Calu3 (cell line): ENCODE measurements at regions of chr9 and their contacts with region 1.

Region 1: GRCh38 chr9:111759762-111760639 is 34.7 kb downstream of the SHOC1 start:
- DNase-seq: peak; percentile 60
- H3K4me3 Mint-ChIP-seq: no peak overlapping the region
- H3K27ac Mint-ChIP-seq: peak overlapping the region; percentile 35
- H3K4me1 Mint-ChIP-seq: peaks cover 13% of the 10 kb centered on the region
- H3K27me3 Mint-ChIP-seq: no peaks in the 10 kb centered on the region
- CTCF ChIP-seq: no peak

Region 2: GRCh38 chr9:111815277-111816070 is 55.5 kb after region 1 on chr9:
- CTCF ChIA-PET with region 1: no interaction called
- intact Hi-C with region 1: loop called (anchors 5 kb)
- DNase-seq: peak; percentile 36
- H3K4me3 Mint-ChIP-seq: peak overlapping the region; percentile 50
- H3K27ac Mint-ChIP-seq: peak overlapping the region; percentile 90
- H3K4me1 Mint-ChIP-seq: peaks cover 28% of the 10 kb centered on the region
- H3K27me3 Mint-ChIP-seq: no peaks in the 10 kb centered on the region
- CTCF ChIP-seq: no peak

Region 3: GRCh38 chr9:111896353-111896958 is 136.5 kb after region 1 on chr9 and contains the start of gene UGCG:
- CTCF ChIA-PET with region 1: no interaction called
- intact Hi-C with region 1: loop called (anchors 1 kb)
- DNase-seq: peak; percentile 90
- H3K4me3 Mint-ChIP-seq: no peak within 1 kb of the TSS
- H3K27ac Mint-ChIP-seq: peak within 1 kb of the TSS; percentile 96
- H3K4me1 Mint-ChIP-seq: no peaks in the 10 kb centered on the region
- H3K27me3 Mint-ChIP-seq: no peaks in the 10 kb centered on the region
- CTCF ChIP-seq: no peak
- total RNA-seq, gene UGCG: 75.5 and 84.8 TPM in 2 replicates

Region 4: DNA sequence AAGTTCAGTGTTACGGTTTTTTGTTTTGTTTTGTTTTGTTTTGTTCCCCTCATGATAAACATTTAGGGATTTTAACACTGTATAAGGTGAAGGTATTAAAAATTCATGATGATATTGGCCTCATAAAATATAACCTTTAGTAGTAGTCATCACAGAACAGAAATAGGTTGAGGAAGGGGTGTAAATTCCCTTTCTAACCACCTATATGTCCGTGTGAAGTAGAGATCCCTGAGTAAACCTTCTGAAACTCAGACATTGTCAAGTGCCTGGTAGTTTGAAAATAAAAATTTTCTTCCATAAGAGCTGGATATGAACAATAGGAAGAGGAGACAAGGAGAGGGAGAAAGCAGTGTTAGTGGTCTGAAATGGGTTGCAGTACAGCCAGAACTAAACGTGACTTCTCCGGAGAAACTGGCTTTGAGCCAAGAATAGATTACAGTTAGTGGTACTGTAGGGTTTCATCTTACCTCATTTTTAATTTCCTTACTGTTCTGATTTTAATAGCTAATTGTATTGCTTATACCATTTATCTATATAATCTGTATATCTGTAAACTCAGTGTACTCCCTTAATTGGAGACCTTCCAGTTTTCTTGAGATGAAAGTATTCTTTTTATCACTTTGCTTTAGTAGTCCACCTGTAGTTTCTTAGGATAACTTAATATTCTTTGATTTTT is 154.9 kb after region 1 on chr9:
- CTCF ChIA-PET with region 1: no interaction called
- intact Hi-C with region 1: loop called (anchors 5 kb)
- DNase-seq: no peak
- H3K4me3 Mint-ChIP-seq: peak overlapping the region; percentile 69
- H3K27ac Mint-ChIP-seq: peak overlapping the region; percentile 63
- H3K4me1 Mint-ChIP-seq: peaks cover 43% of the 10 kb centered on the region
- H3K27me3 Mint-ChIP-seq: no peaks in the 10 kb centered on the region
- CTCF ChIP-seq: no peak

Region 5: DNA sequence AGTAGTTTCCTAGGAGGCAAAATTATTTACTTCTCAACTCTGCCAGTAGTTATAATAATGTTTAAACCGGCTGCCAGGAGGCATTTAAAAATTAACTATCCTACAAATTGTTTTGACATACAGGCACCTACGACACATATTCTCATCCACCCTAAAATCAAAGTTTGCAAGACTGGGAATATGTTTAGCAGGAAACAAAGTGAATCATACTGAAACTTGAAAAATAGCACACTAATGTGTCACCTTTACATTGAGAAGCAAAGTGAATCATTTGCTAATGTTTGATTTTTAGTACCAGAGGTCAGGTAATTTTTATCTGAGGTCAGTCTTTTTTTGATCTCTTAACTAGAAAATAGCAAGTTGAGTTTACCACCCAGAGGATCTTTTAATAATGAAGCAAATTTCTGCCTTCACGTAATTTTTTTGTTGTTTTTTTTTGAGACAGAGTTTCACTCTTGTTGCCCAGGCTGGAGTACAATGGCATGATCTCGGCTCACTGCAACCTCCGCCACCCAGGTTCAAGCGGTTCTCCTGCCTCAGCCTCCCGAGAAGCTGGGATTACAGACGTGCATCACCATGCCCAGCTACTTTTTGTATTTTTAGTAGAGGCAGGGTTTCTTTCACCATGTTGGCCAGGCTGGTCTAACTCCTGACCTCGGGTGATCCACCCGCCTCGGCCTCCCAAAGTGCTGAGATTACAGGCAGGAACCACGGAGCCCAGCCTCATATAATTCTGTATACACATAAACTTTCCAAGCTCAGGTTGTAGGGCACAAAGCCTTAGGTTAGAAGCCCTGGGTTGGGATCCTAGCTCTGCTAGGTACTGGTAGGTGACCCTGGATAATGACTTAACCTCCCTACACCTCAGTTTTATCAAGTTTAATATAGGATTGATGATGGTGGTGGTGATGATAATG is 260.9 kb after region 1 on chr9:
- CTCF ChIA-PET with region 1: no interaction called
- intact Hi-C with region 1: loop called (anchors 5 kb)
- DNase-seq: no peak
- H3K4me3 Mint-ChIP-seq: peak overlapping the region; percentile 28
- H3K27ac Mint-ChIP-seq: peak overlapping the region; percentile 92
- H3K4me1 Mint-ChIP-seq: peaks cover 34% of the 10 kb centered on the region
- H3K27me3 Mint-ChIP-seq: no peaks in the 10 kb centered on the region
- CTCF ChIP-seq: no peak

Region 6: GRCh38 chr9:112074250-112075008 is 314.4 kb after region 1 on chr9:
- CTCF ChIA-PET with region 1: interaction called, 8 read pairs
- intact Hi-C with region 1: loop called (anchors 1 kb)
- DNase-seq: peak; percentile 70
- H3K4me3 Mint-ChIP-seq: no peak overlapping the region
- H3K27ac Mint-ChIP-seq: peak overlapping the region; percentile 93
- H3K4me1 Mint-ChIP-seq: peaks cover 50% of the 10 kb centered on the region
- H3K27me3 Mint-ChIP-seq: no peaks in the 10 kb centered on the region
- CTCF ChIP-seq: peak; percentile 44

Region 7: GRCh38 chr9:112361601-112362000 is 601.6 kb after region 1 on chr9:
- CTCF ChIA-PET with region 1: no interaction called
- intact Hi-C with region 1: loop called (anchors 5 kb)
- DNase-seq: peak; percentile 12
- H3K4me3 Mint-ChIP-seq: no peak overlapping the region
- H3K27ac Mint-ChIP-seq: no peak overlapping the region
- H3K4me1 Mint-ChIP-seq: no peaks in the 10 kb centered on the region
- H3K27me3 Mint-ChIP-seq: no peaks in the 10 kb centered on the region
- CTCF ChIP-seq: no peak